Left ventricle myocardium inferior (tissue), 1 donor: ENCODE measurements at regions of chr5 and their contacts with region 1.

Region 1: GRCh38 chr5:115634343-115635132 is 8.7 kb upstream of the TMED7 start:
- DNase-seq: peak; percentile 86
- H3K4me3 ChIP-seq: peak overlapping the region; percentile 53
- H3K27ac ChIP-seq: peak overlapping the region; percentile 64
- H3K4me1 ChIP-seq: peaks cover 7% of the 10 kb centered on the region
- H3K27me3 ChIP-seq: no peaks in the 10 kb centered on the region
- CTCF ChIP-seq: peak; percentile 94

Region 2: DNA sequence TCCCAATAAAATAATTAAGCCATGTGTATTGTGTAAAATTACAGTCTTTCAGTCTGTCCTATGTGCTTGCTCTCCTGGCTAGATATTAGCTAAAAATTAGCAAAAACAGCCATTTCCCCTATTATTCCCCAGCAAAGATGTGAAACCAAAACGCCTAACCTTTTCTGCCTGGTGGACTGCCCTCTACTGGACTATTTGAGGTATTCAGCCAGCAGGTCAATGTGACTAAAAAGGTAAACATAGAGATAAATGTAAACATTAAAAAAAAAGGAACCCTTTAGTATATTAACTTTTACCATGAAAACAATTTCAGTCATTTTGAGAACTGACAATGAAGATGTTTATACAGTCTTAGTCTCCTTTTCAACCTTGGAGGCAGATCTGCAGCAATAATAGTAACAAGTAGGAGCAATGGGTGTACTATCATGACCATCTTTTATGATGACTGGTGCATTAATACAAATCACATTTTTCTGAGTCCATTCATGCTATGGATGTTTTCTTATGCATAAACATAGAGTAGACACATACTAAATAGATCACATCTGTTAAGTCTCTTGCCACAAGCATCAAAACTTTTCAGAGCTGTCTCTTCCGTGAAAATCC is 196.7 kb after region 1 on chr5:
- intact Hi-C with region 1: loop called (anchors 2 kb)
- DNase-seq: no peak
- H3K4me3 ChIP-seq: no peak overlapping the region
- H3K27ac ChIP-seq: no peak overlapping the region
- H3K4me1 ChIP-seq: no peaks in the 10 kb centered on the region
- H3K27me3 ChIP-seq: no peaks in the 10 kb centered on the region
- CTCF ChIP-seq: peak; percentile 81